ENCODE measurements at regions of chr2 and their contacts with region 1.

Region 1: GRCh38 chr2:101036562-101037457 is 34.7 kb downstream of the RPL31 start:
- DNase-seq: peak in 1 of 4 donors; percentile 2
- ATAC-seq: no peak
- H3K4me3 ChIP-seq: no peak overlapping the region
- H3K27ac ChIP-seq: no peak overlapping the region
- H3K4me1 ChIP-seq: no peaks in the 10 kb centered on the region
- H3K27me3 ChIP-seq: no peaks in the 10 kb centered on the region
- CTCF ChIP-seq: peak in 6 of 7 experiments; percentile 29 to 62 (median 54)
- POLR2A ChIP-seq: no peak

Region 2: GRCh38 chr2:99624677-99625076 is 1412.1 kb before region 1 on chr2:
- intact Hi-C with region 1: no loop called
- DNase-seq: no peak
- ATAC-seq: no peak
- H3K4me3 ChIP-seq: no peak overlapping the region
- H3K27ac ChIP-seq: no peak overlapping the region
- H3K4me1 ChIP-seq: no peaks in the 10 kb centered on the region
- H3K27me3 ChIP-seq: no peaks in the 10 kb centered on the region
- CTCF ChIP-seq: no peak
- POLR2A ChIP-seq: no peak

Region 3: GRCh38 chr2:101151141-101151858 is 114.5 kb after region 1 on chr2 and contains the start of gene TBC1D8:
- intact Hi-C with region 1: loop called (anchors 10 kb)
- DNase-seq: peak; percentile 90 to 92 (median 90)
- ATAC-seq: peak; percentile 90
- H3K4me3 ChIP-seq: peak within 1 kb of the TSS; percentile 48 to 70
- H3K27ac ChIP-seq: peak within 1 kb of the TSS; percentile 81 to 91 (median 85)
- H3K4me1 ChIP-seq: peaks cover 56% of the 10 kb centered on the region
- H3K27me3 ChIP-seq: no peaks in the 10 kb centered on the region
- CTCF ChIP-seq: no peak
- POLR2A ChIP-seq: peak; percentile 51 to 94 (median 69)
- total RNA-seq, gene TBC1D8: 63.8 to 111 TPM

Region 4: DNA sequence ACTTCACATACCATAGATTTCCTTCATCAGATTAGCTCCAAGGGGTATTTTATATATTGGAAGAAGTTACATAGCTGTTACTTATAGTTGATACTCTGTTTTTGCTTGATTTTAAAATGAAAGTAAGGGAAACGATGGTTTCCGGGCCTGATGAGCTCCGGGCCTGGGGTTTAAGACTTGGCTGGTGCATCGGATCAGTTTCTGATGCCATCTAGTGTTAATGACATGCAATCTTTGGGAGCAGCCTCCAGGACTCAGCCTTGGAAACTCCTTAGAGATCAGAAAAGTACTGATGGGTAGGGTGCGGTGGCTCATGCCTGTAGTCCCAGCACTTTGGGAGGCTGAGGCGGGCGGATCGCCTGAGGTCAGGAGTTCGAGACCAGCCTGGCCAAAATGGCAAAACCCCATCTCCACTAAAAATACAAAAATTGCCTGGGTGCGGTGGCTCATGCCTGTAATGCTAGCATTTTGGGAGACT is 168.8 kb after region 1 on chr2:
- intact Hi-C with region 1: loop called (anchors 10 kb)
- DNase-seq: peak; percentile 59 to 82 (median 74)
- ATAC-seq: peak; percentile 92
- H3K4me3 ChIP-seq: no peak overlapping the region
- H3K27ac ChIP-seq: peak overlapping the region in 2 of 4 donors; percentile 12 to 13
- H3K4me1 ChIP-seq: peaks cover 18% of the 10 kb centered on the region
- H3K27me3 ChIP-seq: no peaks in the 10 kb centered on the region
- CTCF ChIP-seq: peak; percentile 29 to 76 (median 68)
- POLR2A ChIP-seq: no peak